Endothelial cell of umbilical vein (primary cell): ENCODE measurements at regions of chr11 and their contacts with region 1.

Region 1: DNA sequence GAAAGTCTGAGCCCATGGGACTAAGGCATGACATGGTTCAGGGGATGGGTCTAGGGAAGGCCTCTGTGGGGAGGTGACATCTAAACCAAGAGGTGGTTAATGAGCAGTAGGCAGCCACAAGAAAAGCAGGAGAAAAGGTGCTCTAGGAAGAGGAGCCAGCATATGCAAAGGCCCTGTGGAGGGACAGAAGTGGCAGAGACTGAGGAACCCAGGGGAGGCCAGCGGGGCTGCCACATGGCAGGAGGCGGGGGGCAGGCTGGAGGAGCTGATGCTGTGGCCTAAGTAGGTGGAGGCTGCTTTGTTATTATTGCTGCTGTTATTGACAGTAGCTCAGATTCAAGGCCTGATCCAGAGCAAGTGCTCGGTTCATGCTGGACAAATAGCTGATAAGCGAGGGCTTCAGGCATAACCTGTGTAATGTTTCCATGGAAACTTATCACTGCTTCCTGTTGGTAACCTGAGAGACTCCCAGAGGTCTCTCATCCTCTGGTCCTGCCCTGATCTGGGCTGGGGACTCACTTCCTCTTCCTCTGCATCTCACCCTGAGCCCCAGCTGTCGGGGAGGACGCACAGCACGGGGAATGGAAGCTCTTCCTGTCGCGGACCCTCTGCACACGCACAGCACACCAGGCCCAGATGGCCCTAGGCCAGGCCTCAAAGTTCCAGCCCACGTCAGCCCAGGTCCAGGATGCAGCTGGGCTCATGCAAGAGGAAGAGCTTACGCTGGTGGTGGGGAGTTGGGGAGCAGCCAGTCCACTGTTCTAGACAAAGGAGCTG is 75.2 kb upstream of the TP53I11 start:
- DNase-seq: peak; percentile 98
- H3K4me3 ChIP-seq: no peak overlapping the region
- H3K27ac ChIP-seq: peak overlapping the region; percentile 67
- H3K4me1 ChIP-seq: peaks cover 14% of the 10 kb centered on the region
- H3K27me3 ChIP-seq: peaks cover 3 to 11% of the 10 kb centered on the region in 2 experiments
- CTCF ChIP-seq: no peak
- POLR2A ChIP-seq: no peak

Region 2: GRCh38 chr11:44977476-44977984 is 48.4 kb before region 1 on chr11:
- CTCF ChIA-PET with region 1: no interaction called
- POLR2A ChIA-PET with region 1: interaction called, 3 read pairs
- dilution Hi-C with region 1: no loop called
- intact Hi-C with region 1: loop called (anchors 1 kb)
- DNase-seq: peak; percentile 54
- H3K4me3 ChIP-seq: no peak overlapping the region
- H3K27ac ChIP-seq: peak overlapping the region; percentile 14
- H3K4me1 ChIP-seq: peaks cover 42% of the 10 kb centered on the region
- H3K27me3 ChIP-seq: no peaks in the 10 kb centered on the region
- CTCF ChIP-seq: peak; percentile 12 to 15
- POLR2A ChIP-seq: no peak

Region 3: GRCh38 chr11:45048870-45049691 is 23.2 kb after region 1 on chr11:
- CTCF ChIA-PET with region 1: interaction called, 3 read pairs
- POLR2A ChIA-PET with region 1: no interaction called
- dilution Hi-C with region 1: no loop called
- intact Hi-C with region 1: loop called (anchors 1 kb)
- DNase-seq: no peak
- H3K4me3 ChIP-seq: no peak overlapping the region
- H3K27ac ChIP-seq: no peak overlapping the region
- H3K4me1 ChIP-seq: peaks cover 11% of the 10 kb centered on the region
- H3K27me3 ChIP-seq: peaks cover 0 to 6% of the 10 kb centered on the region in 2 experiments
- CTCF ChIP-seq: no peak
- POLR2A ChIP-seq: no peak

Region 4: GRCh38 chr11:45102810-45103621 is 77.1 kb after region 1 on chr11:
- CTCF ChIA-PET with region 1: interaction called, 13 read pairs
- POLR2A ChIA-PET with region 1: no interaction called
- dilution Hi-C with region 1: no loop called
- intact Hi-C with region 1: loop called (anchors 2 kb)
- DNase-seq: peak; percentile 86
- H3K4me3 ChIP-seq: no peak overlapping the region
- H3K27ac ChIP-seq: no peak overlapping the region
- H3K4me1 ChIP-seq: peaks cover 7% of the 10 kb centered on the region
- H3K27me3 ChIP-seq: peaks cover 0 to 3% of the 10 kb centered on the region in 2 experiments
- CTCF ChIP-seq: peak; percentile 82
- POLR2A ChIP-seq: no peak